GM10248 (cell line): ENCODE measurements at regions of chr16 and their contacts with region 1.

Region 1: GRCh38 chr16:82263521-82264143 is 93.6 kb upstream of the MPHOSPH6 start:
- DNase-seq: peak; percentile 49
- CTCF ChIP-seq: peak; percentile 95

Region 2: GRCh38 chr16:82248677-82249076 is 15.0 kb before region 1 on chr16:
- CTCF ChIA-PET with region 1: interaction called, 61 read pairs
- POLR2A ChIA-PET with region 1: no interaction called
- DNase-seq: no peak
- CTCF ChIP-seq: no peak

Region 3: DNA sequence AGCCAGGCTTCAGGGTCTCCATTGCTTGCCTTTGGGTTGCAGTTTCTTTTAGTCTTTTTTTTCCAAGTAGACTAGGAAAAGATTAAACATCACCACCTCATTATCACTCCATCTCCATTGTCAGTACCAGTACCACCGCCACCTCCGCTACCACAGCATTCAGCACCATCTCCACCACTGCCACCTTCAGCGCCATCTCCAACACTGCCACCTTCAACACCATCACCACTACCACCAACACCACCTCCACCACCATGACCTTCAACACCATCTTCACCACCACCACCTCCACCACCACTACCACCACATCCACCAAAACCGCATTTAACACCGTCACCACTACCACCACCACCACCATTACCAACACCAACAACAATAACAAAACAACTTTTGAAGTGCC is 47.9 kb after region 1 on chr16:
- CTCF ChIA-PET with region 1: no interaction called
- POLR2A ChIA-PET with region 1: no interaction called
- DNase-seq: no peak
- CTCF ChIP-seq: no peak

Region 4: DNA sequence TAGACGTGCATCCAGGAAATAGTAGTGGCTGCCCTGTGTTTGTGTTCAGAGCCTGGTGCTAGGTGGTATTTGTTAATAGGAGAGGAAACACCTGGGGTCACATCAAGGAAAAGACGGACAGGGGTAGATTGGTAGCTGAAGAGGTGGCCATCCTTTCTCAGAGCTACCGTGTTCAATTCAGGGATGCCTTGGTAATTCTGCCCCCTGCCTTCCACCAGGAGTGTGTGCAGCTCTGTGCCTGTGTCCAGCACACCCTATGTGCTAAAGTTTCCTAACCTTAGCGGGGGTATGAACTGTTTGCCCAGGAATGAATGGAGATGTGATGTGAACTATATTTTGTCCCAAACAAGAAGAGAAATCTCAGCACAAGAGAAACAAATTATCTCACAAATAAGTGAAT is 80.5 kb after region 1 on chr16:
- CTCF ChIA-PET with region 1: interaction called, 33 read pairs
- POLR2A ChIA-PET with region 1: no interaction called
- DNase-seq: no peak
- CTCF ChIP-seq: peak; percentile 16

Region 5: GRCh38 chr16:82639666-82640336 is 376.2 kb after region 1 on chr16:
- CTCF ChIA-PET with region 1: interaction called, 15 read pairs
- POLR2A ChIA-PET with region 1: no interaction called
- DNase-seq: peak; percentile 54
- CTCF ChIP-seq: peak; percentile 83

Region 6: GRCh38 chr16:83449861-83450260 is 1186.2 kb after region 1 on chr16:
- CTCF ChIA-PET with region 1: interaction called, 36 read pairs
- POLR2A ChIA-PET with region 1: no interaction called
- DNase-seq: no peak
- CTCF ChIP-seq: no peak